Mucosa of descending colon (tissue), 3 donors: ENCODE measurements at regions of chr7 and their contacts with region 1.

Region 1: DNA sequence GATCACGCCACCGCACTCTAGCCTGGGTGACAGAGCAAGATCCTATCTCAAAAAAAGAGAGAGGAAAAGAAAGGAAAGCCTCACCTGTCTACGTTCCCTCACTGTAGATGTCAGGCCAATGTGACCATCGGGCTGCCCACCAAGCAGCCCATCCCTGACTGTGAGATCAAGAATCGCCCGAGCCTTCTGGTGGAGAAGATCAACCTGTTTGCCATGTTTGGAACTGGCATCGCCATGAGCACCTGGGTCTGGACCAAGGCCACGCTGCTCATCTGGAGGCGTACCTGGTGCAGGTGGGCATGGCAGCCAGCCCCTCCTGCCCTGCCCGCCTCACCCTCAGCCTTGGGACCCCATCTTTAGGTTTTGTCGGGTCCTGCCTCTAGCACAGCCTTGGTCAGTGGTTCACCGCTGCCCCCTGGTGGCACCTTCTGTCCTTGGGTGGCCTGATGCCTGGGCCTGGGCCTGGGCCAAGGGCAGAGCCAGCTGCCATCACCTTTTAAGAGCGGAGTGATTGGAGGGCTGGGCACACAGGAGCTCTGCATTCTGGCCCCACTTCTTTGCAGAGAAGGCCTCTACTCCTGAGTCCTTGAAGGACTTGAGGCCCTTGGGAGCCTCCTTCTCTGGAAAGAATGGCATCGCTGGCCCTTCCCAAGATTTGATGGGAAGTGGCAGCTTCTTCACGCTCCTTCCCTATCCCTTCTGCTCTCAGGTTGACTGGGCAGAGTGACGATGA is 14.4 kb upstream of the AHCYL2 start:
- DNase-seq: peak; percentile 68 to 89 (median 86)
- ATAC-seq: peak; percentile 89
- H3K4me3 ChIP-seq: no peak overlapping the region
- H3K4me1 ChIP-seq: no peaks in the 10 kb centered on the region
- CTCF ChIP-seq: peak; percentile 76

Region 2: GRCh38 chr7:129054438-129055293 is 155.8 kb before region 1 on chr7 and contains the start of gene TNPO3:
- intact Hi-C with region 1: no loop called
- DNase-seq: peak; percentile 96 to 97 (median 97)
- ATAC-seq: peak; percentile 97
- H3K4me3 ChIP-seq: peak within 1 kb of the TSS; percentile 67
- H3K4me1 ChIP-seq: peaks cover 14% of the 10 kb centered on the region
- CTCF ChIP-seq: no peak
- total RNA-seq, gene TNPO3: 36.0 to 43.6 (median 38.7) TPM

Region 3: DNA sequence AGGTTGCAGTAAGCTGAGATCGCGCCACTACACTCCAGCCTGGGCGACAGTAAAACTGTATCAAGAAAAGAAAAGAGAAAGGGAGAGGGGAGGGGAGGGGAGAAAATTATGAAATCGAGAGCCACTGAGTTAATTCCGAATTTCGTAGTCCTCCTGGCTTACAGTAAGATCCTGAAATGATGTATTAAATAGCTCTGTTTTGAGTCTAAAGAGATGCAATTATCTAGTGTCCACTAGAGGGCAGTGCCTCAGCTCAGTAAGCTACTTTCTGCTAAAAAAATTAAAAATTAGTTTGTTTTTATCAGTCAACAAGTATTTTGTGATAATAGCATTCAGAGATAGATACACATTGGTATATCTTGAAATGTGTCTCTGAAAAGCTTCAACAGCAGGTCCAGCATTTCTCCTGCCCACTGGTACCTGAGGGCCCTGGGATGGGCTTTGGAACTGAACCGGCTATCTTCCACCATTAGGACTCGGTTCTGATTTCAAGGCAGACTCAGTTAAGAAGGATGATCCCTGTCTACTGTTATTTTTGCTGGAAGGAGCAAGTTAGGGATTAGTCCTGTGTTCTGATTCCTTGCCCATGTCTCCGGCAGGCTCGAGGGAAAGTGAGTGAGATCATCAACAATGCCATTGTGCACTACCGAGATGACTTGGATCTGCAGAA is 46.4 kb before region 1 on chr7:
- intact Hi-C with region 1: loop called (anchors 1 to 5 kb)
- DNase-seq: peak in 1 of 3 donors; percentile 39
- ATAC-seq: peak; percentile 34
- H3K4me3 ChIP-seq: no peak overlapping the region
- H3K4me1 ChIP-seq: no peaks in the 10 kb centered on the region
- CTCF ChIP-seq: peak; percentile 55

Region 4: DNA sequence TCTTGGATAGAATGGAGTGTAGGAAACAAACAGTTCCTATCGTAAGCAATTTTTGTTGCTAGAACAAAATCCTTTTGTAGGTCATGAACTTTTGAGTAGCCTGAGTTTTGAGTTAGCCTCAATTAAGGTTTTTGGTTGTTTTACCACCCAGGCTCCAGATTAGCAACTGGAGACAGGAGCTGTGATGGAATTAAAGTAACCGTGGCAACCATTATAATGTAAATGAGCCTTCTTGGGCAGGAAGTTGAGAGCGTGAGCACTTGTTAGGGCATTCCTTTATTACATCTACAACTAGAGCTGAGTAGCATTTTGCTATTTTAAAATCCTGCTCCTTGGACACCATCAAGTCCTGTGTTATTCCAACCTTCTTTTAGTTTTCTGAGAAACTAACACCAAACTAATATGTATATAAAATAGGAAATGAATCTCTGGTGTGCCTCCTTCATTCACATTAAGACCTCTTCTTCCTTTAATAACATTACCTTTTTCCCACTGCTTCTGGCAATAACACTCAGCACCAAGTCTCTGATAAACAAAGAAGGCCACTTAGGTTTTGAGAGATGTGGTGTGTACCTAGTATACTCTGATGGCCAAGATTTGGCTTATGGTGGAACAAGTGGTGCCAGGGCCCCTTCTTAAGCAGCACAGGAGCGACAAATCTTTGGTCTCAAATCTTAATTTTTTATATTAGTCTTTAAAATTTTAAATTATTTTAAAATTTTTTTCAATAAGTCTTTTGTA is 48.4 kb after region 1 on chr7:
- intact Hi-C with region 1: no loop called
- DNase-seq: no peak
- ATAC-seq: no peak
- H3K4me3 ChIP-seq: no peak overlapping the region
- H3K4me1 ChIP-seq: peaks cover 2% of the 10 kb centered on the region
- CTCF ChIP-seq: no peak

Region 5: DNA sequence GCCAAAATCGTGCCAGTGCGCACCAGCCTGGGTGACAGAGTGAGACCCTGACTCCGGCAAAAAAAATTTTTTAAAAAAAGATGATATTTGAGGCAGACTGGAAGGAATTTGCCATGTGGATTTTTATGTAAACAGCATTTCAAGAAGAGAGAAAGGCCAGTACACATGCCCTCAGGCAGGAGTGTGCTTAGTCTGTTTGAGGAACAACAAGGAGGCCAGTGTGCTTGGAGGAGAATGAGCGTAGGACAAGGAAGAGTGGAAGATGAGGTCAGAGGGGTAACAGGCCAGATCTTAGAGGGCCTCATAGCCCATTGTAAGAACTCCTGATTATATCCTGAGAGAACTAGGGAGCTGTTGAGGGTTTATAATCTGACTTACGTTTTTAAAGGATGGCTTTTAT is 206.6 kb after region 1 on chr7:
- intact Hi-C with region 1: no loop called
- DNase-seq: no peak
- ATAC-seq: no peak
- H3K4me3 ChIP-seq: no peak overlapping the region
- H3K4me1 ChIP-seq: no peaks in the 10 kb centered on the region
- CTCF ChIP-seq: no peak